ENCODE measurements at regions of chr10 and their contacts with region 1.

Region 1: DNA sequence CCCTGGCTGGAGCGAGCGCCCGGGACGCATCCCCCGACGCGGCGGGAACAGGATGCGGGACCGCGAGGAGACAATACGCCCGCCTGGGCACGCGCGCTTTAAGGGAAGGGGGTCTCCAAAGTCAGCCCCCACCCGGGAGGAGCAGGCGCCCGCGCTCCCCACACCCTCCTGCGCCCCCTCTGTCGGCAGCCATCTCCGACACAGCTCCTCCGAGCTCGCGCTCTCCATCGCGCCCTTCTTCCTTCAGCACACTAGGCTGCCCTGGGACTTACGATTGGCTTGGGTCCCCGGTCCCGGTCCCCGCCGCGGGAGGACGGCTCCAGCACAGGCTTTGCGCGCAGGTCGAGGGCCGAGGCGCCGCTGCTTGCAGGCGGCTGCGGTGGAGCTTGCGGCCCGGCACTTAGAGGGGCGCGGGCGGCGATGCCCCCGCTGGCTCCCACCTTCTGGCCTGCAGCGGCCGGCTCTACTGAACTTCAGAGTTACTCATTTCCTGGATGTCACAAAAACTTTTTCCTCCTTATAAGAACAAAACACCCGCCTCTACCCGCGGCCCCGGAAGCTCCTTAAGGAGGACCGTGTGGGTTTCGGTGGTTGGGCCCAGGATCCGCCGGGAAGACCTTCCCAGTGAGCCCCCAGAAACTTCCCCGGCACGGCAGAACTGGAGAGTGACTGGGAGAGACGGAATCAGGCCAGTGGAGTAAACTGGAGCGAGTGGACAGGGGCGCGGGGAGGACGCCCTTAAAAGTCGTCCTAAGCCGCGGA is at the start of gene ITPRIP:
- DNase-seq: peak; percentile 56 to 71
- ATAC-seq: peak; percentile 71 to 76
- H3K4me3 ChIP-seq: peak within 1 kb of the TSS; percentile 73 to 98 (median 94)
- H3K27ac ChIP-seq: peak within 1 kb of the TSS; percentile 96 to 99 (median 96)
- H3K4me1 ChIP-seq: peaks cover 40 to 41% of the 10 kb centered on the region in 2 donors
- H3K27me3 ChIP-seq: no peaks in the 10 kb centered on the region
- CTCF ChIP-seq: peak in 2 of 5 experiments; percentile 14 to 34
- POLR2A ChIP-seq: peak; percentile 94 to 96
- total RNA-seq, gene ITPRIP: 5.0 to 19.9 (median 7.9) TPM

Region 2: GRCh38 chr10:103870516-103870915 is 467.6 kb before region 1 on chr10:
- in situ Hi-C with region 1: no loop called
- intact Hi-C with region 1: no loop called
- DNase-seq: no peak
- ATAC-seq: no peak
- H3K4me3 ChIP-seq: no peak overlapping the region
- H3K27ac ChIP-seq: no peak overlapping the region
- H3K4me1 ChIP-seq: no peaks in the 10 kb centered on the region
- H3K27me3 ChIP-seq: no peaks in the 10 kb centered on the region
- CTCF ChIP-seq: no peak
- POLR2A ChIP-seq: no peak

Region 3: DNA sequence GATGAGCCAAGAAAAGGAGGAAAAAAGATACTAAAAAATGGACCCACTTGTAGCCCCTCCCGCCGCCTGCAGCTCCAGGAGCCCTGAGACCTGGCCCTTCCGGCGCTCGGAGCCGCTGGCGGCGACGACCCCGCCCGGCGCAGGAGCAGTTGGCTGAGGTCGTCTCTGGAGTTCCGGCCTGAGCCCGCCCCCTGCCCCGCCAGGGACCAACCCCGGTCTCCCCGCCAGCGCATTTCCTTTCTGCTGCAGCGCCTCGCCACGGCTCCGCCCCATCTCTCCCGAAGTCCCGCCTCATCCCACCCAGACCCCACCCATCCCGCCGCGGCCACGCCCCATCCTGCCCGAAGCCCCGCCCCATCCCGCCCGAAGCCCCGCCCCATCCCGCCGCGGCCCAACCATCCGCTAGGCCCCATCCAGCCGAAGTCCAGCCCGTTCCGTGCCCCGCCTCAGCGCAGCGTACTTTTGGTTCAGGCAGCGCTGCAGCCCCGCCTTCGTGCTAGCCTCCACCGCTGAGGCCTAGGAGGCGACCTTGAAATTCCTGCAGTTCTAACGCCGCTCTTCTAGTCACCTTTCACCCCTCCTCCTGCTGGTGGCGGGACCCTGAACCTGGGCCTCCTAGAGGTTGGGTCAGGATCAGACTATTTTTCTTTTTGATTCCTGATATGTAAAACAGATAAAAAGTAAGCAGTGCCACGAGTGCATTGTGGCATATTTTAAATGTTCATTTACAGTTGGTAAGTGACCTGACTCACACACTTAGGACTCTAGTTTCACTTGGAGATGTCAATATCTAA is 419.9 kb before region 1 on chr10 and contains the start of gene STN1:
- in situ Hi-C with region 1: no loop called
- intact Hi-C with region 1: loop called (anchors 10 kb)
- DNase-seq: peak; percentile 98
- ATAC-seq: peak; percentile 90 to 92
- H3K4me3 ChIP-seq: peak within 1 kb of the TSS; percentile 85 to 95 (median 89)
- H3K27ac ChIP-seq: peak within 1 kb of the TSS; percentile 92 to 98 (median 96)
- H3K4me1 ChIP-seq: peaks cover 31 to 33% of the 10 kb centered on the region in 2 donors
- H3K27me3 ChIP-seq: no peaks in the 10 kb centered on the region
- CTCF ChIP-seq: peak in 1 of 5 experiments; percentile 12
- POLR2A ChIP-seq: peak; percentile 96 to 97
- total RNA-seq, gene STN1: 15.1 to 24.7 (median 20.5) TPM

Region 4: DNA sequence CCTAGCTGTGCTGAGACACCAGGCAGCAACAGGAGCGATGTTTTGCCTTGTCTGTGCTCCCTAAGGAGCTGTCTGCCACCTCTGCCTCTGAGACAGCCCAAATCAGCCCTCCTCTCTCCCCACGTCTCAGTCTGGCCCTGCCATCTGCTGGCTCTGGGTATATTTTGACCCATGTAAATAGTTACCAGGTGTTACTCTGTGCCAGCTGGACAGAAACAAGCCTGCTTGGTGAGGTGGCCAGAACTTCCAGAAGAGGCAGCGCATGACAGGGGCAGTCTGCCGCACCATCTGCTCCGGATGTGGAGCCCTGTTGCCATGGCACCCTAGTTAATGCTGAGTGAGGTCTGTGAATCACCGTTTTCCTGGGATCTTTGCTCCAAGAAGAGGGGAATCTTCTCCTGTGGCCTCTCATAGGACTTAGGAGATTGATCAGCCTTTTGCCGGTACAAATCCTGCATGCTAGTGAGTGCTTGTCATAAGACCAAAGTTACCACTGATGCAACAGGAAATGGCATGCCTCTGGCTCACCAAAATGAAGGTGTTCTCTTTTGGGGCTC is 37.3 kb before region 1 on chr10:
- in situ Hi-C with region 1: no loop called
- intact Hi-C with region 1: loop called (anchors 2 kb)
- DNase-seq: peak; percentile 76 to 77
- ATAC-seq: peak; percentile 66 to 83
- H3K4me3 ChIP-seq: peak overlapping the region in 1 of 4 donors; percentile 3
- H3K27ac ChIP-seq: peak overlapping the region; percentile 66 to 77 (median 74)
- H3K4me1 ChIP-seq: peaks cover 46 to 52% of the 10 kb centered on the region in 2 donors
- H3K27me3 ChIP-seq: no peaks in the 10 kb centered on the region
- CTCF ChIP-seq: peak in 2 of 5 experiments; percentile 7 to 26
- POLR2A ChIP-seq: peak; percentile 0 to 23

Region 5: DNA sequence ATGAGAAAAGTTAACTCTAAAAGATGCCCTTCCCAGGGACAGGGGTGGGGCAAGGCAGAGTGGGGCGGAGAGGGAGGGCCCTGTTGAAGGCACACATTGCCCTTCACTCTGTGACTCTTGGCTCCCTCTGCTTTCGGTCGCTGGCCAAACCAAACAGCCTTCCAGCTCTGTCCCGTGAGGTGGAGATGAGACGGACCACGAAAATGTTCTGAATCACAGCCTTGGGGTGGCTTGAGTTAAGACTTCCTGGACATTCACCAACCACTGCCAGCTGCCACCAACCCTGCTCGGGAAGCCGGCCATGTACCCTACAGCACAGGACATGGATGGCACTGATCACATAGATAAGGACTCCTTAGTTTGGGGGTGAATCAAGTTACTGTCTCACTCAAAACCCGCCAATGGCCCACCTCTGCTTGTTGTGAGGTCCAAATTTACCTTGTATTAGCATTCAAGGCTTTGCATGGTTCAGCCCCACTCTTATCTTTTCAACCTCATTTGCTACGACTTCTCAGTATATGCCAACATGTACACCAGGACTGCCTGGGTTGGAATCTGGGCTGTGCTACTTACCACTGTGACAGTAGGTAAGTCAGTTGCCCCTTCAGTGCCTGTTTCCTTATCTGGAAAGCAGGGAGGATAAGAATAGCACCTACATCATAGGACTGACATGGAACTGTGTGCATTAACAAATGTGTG is 28.0 kb before region 1 on chr10:
- in situ Hi-C with region 1: no loop called
- intact Hi-C with region 1: loop called (anchors 1 kb)
- DNase-seq: peak; percentile 87 to 91
- ATAC-seq: peak; percentile 90 to 92
- H3K4me3 ChIP-seq: no peak overlapping the region
- H3K27ac ChIP-seq: peak overlapping the region; percentile 82 to 87 (median 86)
- H3K4me1 ChIP-seq: peaks cover 35 to 54% of the 10 kb centered on the region in 2 donors
- H3K27me3 ChIP-seq: no peaks in the 10 kb centered on the region
- CTCF ChIP-seq: no peak
- POLR2A ChIP-seq: peak in 1 of 2 donors; percentile 30

Region 6: GRCh38 chr10:104835422-104835821 is 497.3 kb after region 1 on chr10:
- in situ Hi-C with region 1: no loop called
- intact Hi-C with region 1: no loop called
- DNase-seq: no peak
- ATAC-seq: no peak
- H3K4me3 ChIP-seq: no peak overlapping the region
- H3K27ac ChIP-seq: no peak overlapping the region
- H3K4me1 ChIP-seq: no peaks in the 10 kb centered on the region
- H3K27me3 ChIP-seq: no peaks in the 10 kb centered on the region
- CTCF ChIP-seq: no peak
- POLR2A ChIP-seq: no peak